Lower leg skin (tissue), 4 donors: ENCODE measurements at regions of chr3 and their contacts with region 1.

Region 1: GRCh38 chr3:133377396-133377795 is 22.5 kb upstream of the BFSP2 start:
- DNase-seq: no peak
- H3K4me3 ChIP-seq: no peak overlapping the region
- CTCF ChIP-seq: no peak
- POLR2A ChIP-seq: no peak

Region 2: DNA sequence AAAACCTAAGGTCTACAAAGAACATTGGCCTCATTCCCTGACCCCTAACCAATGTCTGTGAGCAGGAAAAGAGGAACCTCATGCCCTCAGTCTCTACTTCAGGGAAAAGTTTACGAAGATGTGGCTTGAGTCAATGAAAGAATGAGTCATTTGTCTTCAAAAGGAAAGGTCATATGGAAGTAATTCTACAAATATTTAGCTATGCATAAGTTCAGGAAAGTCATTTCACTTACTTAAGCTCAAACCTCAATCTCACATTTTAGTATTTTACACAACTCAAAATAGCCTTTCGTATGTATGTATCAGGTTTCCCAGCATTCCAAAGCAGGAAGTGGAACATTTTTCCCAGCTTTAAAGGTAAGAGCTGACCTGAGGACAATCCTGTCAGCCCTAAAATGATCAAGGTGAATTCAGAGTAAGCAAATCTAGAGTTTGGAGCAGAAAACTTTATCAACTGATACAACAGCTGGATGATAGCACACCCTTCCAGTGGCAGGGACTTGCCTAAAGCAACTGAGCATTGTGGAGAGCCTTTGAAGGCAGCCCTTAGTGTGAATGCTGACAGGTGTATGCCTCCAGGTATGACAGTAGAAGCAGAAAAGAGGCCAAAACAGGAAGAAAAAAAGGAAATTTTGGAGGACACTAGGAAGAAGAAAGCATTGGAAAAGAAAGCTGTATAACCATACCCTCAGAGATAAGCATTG is 834.2 kb before region 1 on chr3:
- intact Hi-C with region 1: loop called (anchors 5 kb)
- DNase-seq: no peak
- H3K4me3 ChIP-seq: no peak overlapping the region
- CTCF ChIP-seq: no peak
- POLR2A ChIP-seq: no peak